Left colon (tissue), 2 donors: ENCODE measurements at regions of chr2 and their contacts with region 1.

Region 1: GRCh38 chr2:102251042-102251848 is 60.1 kb upstream of the IL1RL1 start:
- DNase-seq: peak; percentile 56 to 70
- ATAC-seq: peak; percentile 89

Region 2: DNA sequence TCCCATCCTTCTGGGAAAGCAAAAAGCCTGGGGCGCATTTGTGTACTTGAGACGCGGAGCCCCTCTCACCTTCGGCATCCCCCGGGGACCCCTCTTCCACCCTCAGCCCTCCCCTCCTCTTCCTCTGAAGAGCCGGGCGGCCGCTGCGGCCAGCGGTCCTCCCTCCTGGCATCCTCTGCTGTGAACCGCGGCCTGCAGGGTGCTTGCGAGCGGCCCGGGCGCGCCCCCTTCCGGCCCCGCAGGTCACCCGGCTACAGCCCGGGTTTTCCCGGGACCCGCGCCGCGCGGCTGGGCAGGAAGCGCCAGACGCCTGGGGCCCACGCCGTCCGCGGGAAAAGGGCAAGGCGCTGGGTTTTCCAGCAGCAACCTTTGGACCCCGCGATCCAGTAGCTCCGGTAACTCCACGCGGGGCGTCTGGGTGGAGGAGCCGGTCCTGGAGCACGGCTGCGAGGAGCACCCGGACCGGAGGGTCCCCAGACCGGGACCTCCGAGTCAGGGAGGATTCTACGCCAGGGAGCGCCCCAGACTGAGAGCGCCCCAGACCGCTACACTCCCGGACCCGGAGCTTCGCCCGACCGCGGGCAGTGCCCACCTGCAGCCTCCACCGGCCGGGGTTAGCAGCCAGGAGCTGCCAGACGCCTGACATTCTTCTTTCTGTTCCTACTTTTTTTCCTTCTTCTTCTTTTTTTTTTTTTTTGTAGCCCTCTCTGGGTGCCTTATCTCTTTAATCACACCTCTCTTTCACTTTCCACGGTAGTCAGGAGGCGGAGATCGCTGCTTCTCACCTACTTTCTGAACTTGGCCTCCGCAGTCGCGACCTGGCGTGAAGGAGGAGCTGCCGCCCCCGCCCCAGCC is 104.5 kb after region 1 on chr2 and contains the start of gene IL18R1:
- intact Hi-C with region 1: loop called in 1 of 2 experiments (anchors 10 kb)
- DNase-seq: peak; percentile 59 to 83
- ATAC-seq: peak; percentile 99
- total RNA-seq, gene IL18R1: 3.0 to 3.2 TPM